Heart right ventricle (tissue), 16 donors: ENCODE measurements at regions of chr1 and their contacts with region 1.

Region 1: GRCh38 chr1:85307987-85308832 is 31.8 kb upstream of the BCL10 start:
- DNase-seq: peak; percentile 89
- ATAC-seq: peak; percentile 95 to 99 (median 97)
- H3K4me3 ChIP-seq: peak overlapping the region in 1 of 10 donors; percentile 14
- H3K27ac ChIP-seq: peak overlapping the region in 1 of 10 donors; percentile 14
- H3K4me1 ChIP-seq: peaks cover 0 to 17% (median 8%) of the 10 kb centered on the region in 9 donors
- H3K27me3 ChIP-seq: peaks cover 0 to 11% (median 0%) of the 10 kb centered on the region in 7 donors
- CTCF ChIP-seq: peak; percentile 96 to 99 (median 98)

Region 2: DNA sequence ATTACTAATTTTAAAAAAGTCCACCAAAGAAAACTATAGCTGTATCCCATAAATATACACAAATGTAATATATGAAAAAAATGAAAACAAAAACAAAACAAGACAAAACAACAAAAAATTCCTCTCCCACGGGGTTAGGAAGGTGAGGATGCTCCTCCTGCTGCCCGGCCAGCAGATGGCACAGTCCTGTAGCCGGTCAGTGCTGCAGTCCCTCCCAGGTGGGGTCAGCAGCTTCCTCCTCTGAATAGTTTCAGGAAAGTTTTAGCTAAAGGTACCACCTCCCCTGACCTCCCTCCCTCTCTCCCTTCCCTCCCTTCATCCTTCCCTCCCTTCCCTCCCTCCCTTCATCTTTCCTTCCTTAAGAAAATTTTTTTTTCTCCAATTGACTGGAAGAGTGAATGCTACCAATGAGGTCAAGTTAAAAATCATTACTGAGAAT is 36.1 kb after region 1 on chr1:
- intact Hi-C with region 1: loop called in 1 of 10 experiments (anchors 2 kb)
- DNase-seq: no peak
- ATAC-seq: peak in 5 of 8 donors; percentile 65 to 73 (median 72)
- H3K4me3 ChIP-seq: no peak overlapping the region
- H3K27ac ChIP-seq: peak overlapping the region in 4 of 10 donors; percentile 26 to 66 (median 38)
- H3K4me1 ChIP-seq: peaks cover 0 to 40% (median 24%) of the 10 kb centered on the region in 9 donors
- H3K27me3 ChIP-seq: no peaks in the 10 kb centered on the region
- CTCF ChIP-seq: peak in 7 of 9 donors; percentile 35 to 70 (median 55)

Region 3: GRCh38 chr1:85413169-85413568 is 105.0 kb after region 1 on chr1:
- intact Hi-C with region 1: loop called in 1 of 10 experiments (anchors 10 kb)
- DNase-seq: no peak
- ATAC-seq: peak in 1 of 8 donors; percentile 37
- H3K4me3 ChIP-seq: no peak overlapping the region
- H3K27ac ChIP-seq: peak overlapping the region in 2 of 10 donors; percentile 11 to 24
- H3K4me1 ChIP-seq: peaks cover 0 to 7% (median 0%) of the 10 kb centered on the region in 9 donors
- H3K27me3 ChIP-seq: no peaks in the 10 kb centered on the region
- CTCF ChIP-seq: no peak

Region 4: GRCh38 chr1:85448358-85448757 is 140.1 kb after region 1 on chr1:
- intact Hi-C with region 1: no loop called
- DNase-seq: no peak
- ATAC-seq: peak in 7 of 8 donors; percentile 46 to 91 (median 78)
- H3K4me3 ChIP-seq: no peak overlapping the region
- H3K27ac ChIP-seq: peak overlapping the region in 7 of 10 donors; percentile 38 to 80 (median 49)
- H3K4me1 ChIP-seq: peaks cover 5 to 36% (median 24%) of the 10 kb centered on the region in 9 donors
- H3K27me3 ChIP-seq: no peaks in the 10 kb centered on the region
- CTCF ChIP-seq: no peak

Region 5: DNA sequence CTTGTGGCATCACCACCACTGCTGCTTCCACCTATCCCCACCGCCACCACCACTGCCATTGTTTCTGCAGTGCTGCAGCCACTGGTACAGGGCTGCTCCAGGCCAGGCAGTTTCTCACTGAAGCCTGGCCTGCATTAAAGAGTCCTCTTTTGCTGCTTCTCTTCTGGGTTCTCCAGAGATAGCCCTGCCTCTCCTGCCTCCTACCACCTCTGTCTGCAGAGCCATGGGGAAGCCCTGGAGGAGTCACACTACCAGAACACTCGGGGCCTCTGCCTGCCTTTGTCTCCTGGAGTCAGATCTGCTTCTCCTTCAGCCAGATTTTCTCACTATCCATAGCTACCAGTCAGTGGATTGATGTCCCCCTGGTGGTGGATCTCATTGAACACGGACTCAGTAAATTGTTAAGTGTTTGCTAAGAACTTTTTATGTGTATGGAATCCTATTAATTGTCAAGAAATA is 194.4 kb after region 1 on chr1:
- intact Hi-C with region 1: loop called (anchors 1 to 10 kb)
- DNase-seq: peak in 1 of 2 donors; percentile 68
- ATAC-seq: peak; percentile 62 to 94 (median 88)
- H3K4me3 ChIP-seq: no peak overlapping the region
- H3K27ac ChIP-seq: no peak overlapping the region
- H3K4me1 ChIP-seq: peaks cover 0 to 14% (median 0%) of the 10 kb centered on the region in 9 donors
- H3K27me3 ChIP-seq: no peaks in the 10 kb centered on the region
- CTCF ChIP-seq: peak; percentile 22 to 72 (median 58)

Region 6: DNA sequence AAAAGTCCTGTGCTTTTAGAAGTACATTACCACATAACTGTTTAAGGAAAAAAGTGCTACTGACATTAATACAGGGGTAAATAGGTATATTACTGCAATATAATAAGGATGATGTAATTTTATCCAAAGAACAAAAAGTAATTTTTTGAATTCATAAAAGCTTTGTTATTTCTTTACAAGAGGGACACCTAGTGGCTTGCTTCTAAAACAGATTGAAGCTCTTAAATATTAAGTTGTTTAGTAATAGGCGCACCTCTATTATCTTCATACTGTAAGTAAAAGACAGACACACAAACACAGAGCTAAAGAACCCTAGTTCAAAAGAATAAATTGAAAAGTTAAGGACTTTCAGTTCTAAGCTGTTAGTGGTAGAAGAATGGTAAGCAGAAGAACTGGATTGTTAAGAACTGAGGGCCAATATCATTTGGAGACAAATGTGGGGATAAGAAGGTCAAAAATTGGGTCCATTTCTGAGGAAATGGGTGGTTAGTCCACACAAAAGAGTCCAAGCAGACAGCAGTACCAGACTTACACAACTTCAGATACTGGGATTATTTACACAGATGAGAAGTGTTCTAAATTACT is 384.6 kb after region 1 on chr1:
- intact Hi-C with region 1: loop called (anchors 1 to 5 kb)
- DNase-seq: no peak
- ATAC-seq: peak in 4 of 8 donors; percentile 27 to 50 (median 40)
- H3K4me3 ChIP-seq: no peak overlapping the region
- H3K27ac ChIP-seq: peak overlapping the region in 1 of 10 donors; percentile 5
- H3K4me1 ChIP-seq: peaks cover 0 to 16% (median 2%) of the 10 kb centered on the region in 9 donors
- H3K27me3 ChIP-seq: no peaks in the 10 kb centered on the region
- CTCF ChIP-seq: peak; percentile 18 to 72 (median 52)

Region 7: DNA sequence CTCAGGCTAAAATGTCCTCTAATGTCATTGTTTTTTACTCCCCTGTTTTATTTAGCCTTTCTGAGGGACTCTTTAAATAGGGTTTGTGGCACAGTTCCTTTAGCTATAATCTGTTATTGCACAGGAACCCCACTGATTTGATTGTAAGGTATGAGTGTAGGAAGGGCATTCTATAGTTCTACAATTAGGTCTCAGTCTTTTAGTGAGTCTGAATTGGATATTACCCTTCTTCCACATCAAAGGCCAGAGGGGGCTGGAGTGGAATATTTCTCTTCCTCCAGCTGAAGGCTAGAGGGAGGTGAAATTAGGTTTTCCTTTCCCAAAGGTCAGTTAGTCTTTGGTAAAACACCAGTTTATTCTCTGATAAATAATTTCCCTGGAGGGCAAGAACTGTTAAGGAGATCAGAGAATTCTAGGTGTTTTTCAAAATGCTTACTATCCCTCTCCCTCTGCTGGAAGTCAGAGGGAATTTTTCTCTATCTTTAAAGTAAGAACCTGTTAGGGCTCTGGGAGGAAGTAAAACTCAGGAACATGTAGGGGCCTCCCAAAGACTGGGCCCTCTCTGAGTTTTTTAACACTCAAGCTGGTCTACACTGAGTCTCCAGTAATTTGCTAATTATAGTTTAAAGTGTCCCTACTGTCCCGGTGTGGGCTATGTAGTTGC is 576.3 kb after region 1 on chr1:
- intact Hi-C with region 1: loop called in 2 of 10 experiments (anchors 5 to 10 kb)
- DNase-seq: no peak
- ATAC-seq: no peak
- H3K4me3 ChIP-seq: no peak overlapping the region
- H3K27ac ChIP-seq: no peak overlapping the region
- H3K4me1 ChIP-seq: no peaks in the 10 kb centered on the region
- H3K27me3 ChIP-seq: no peaks in the 10 kb centered on the region
- CTCF ChIP-seq: peak in 6 of 9 donors; percentile 26 to 43 (median 30)